OCI-LY7 (cell line): ENCODE measurements at regions of chr16 and their contacts with region 1.

Region 1: DNA sequence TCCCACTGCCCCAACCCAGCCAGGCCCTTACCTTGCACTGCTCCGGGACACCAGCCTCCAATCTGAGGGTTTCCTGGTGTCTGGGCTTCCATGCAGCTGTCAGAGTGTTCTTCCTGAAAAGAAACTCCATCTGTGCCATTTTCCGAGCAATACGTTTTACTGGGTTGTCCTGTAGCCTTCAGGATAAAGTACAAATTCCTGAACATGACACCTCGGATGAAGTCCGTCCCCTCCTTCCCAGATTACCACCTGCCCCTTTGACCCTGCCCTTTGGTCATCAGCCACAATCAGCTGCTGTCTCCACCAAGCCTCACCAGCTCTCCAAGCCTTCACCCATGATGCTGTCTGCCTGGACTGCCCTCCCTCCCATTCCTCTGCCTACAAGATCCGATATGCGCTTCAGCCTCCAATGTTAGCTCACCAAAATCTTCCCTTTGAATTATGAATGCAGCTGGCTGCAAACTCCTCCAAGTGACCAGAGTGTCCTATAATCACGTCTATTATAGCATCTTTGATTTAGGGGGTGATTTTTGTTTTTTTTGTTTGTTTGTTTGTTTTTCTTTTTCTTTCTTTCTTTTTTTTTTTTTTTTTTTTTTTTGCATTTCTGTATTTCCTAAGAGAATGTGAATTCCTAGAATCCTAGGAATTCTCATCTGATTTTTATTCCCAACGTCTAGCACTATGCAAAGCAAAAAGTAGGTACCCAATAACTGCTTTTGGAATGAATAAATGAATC is 60.6 kb upstream of the KIFC3 start:
- DNase-seq: no peak
- H3K4me3 ChIP-seq: no peak overlapping the region
- H3K27ac ChIP-seq: no peak overlapping the region
- H3K4me1 ChIP-seq: no peaks in the 10 kb centered on the region
- CTCF ChIP-seq: no peak

Region 2: GRCh38 chr16:57394444-57394843 is 468.4 kb before region 1 on chr16:
- CTCF ChIA-PET with region 1: no interaction called
- POLR2A ChIA-PET with region 1: interaction called, 10 read pairs
- intact Hi-C with region 1: no loop called
- DNase-seq: no peak
- H3K4me3 ChIP-seq: no peak overlapping the region
- H3K27ac ChIP-seq: no peak overlapping the region
- H3K4me1 ChIP-seq: no peaks in the 10 kb centered on the region
- CTCF ChIP-seq: no peak

Region 3: DNA sequence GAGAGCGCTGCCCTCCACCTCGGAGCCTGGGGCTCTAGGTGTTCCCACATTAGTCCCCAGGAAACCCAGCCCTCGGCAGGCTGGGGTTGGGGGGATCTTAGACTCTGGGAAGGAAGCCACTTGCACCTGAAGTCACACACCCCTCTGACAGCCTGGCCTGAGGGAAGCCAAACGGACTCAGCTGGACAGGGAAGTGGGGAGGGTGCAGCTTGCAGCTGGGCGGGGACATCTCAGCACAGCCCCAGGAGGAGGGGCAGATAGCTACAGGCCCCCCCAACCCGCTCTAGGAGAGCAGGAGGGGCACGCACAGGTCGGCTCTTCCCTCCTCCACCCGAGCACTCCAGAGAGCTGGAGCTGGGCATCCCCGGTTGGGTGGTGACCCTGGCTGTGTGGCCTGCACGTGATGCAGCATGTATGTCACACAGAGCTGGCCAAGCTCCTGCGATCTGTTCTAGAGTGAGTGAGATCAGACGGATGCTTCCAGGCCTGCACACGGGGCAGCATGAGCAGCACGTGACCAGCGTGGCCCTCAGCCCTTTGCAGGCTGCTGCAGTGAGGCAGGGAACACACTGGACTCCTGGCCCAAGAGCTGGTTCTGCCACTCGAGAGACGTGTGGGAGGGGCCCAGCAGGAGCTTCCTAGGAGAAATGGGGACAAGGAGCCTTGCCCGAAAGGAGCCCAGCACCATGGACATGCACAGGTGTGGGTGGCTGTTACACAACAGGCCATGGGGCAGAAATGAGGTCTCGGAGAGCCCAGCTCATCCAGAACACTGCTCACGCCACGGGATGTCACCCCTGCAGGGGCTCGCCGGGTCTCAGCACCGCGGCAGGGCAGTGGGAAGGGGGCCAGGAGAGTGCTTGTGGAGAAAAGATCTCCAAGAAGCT is 76.0 kb before region 1 on chr16:
- CTCF ChIA-PET with region 1: no interaction called
- POLR2A ChIA-PET with region 1: no interaction called
- intact Hi-C with region 1: no loop called
- DNase-seq: no peak
- H3K4me3 ChIP-seq: no peak overlapping the region
- H3K27ac ChIP-seq: no peak overlapping the region
- H3K4me1 ChIP-seq: no peaks in the 10 kb centered on the region
- CTCF ChIP-seq: no peak

Region 4: DNA sequence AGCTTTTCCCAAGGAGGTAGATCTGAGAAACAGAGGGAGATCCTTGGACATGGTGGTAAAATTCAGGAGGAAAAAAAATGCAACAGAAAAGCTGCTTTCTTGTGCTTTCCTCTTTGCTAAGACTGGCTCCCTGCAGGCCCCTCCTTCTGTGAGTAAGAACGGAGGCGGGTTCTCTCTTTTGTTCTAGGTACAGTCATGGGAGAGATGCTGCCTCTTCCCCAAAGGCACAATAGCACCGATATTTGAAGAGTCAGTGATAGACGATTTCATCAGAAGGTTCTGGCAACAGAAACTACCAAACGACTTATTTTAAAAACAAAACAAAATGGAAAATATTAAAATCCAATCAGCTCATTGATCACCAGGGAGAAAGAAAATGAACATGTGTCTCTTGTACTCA is 27.9 kb before region 1 on chr16:
- CTCF ChIA-PET with region 1: interaction called, 3 read pairs
- POLR2A ChIA-PET with region 1: interaction called, 11 read pairs
- intact Hi-C with region 1: no loop called
- DNase-seq: no peak
- H3K4me3 ChIP-seq: no peak overlapping the region
- H3K27ac ChIP-seq: no peak overlapping the region
- H3K4me1 ChIP-seq: no peaks in the 10 kb centered on the region
- CTCF ChIP-seq: no peak

Region 5: GRCh38 chr16:57906382-57907316 is 43.8 kb after region 1 on chr16:
- CTCF ChIA-PET with region 1: no interaction called
- POLR2A ChIA-PET with region 1: no interaction called
- intact Hi-C with region 1: no loop called
- DNase-seq: peak; percentile 13
- H3K4me3 ChIP-seq: no peak overlapping the region
- H3K27ac ChIP-seq: no peak overlapping the region
- H3K4me1 ChIP-seq: no peaks in the 10 kb centered on the region
- CTCF ChIP-seq: peak; percentile 56